IMR-90 (cell line): ENCODE measurements at regions of chr7 and their contacts with region 1.

Region 1: DNA sequence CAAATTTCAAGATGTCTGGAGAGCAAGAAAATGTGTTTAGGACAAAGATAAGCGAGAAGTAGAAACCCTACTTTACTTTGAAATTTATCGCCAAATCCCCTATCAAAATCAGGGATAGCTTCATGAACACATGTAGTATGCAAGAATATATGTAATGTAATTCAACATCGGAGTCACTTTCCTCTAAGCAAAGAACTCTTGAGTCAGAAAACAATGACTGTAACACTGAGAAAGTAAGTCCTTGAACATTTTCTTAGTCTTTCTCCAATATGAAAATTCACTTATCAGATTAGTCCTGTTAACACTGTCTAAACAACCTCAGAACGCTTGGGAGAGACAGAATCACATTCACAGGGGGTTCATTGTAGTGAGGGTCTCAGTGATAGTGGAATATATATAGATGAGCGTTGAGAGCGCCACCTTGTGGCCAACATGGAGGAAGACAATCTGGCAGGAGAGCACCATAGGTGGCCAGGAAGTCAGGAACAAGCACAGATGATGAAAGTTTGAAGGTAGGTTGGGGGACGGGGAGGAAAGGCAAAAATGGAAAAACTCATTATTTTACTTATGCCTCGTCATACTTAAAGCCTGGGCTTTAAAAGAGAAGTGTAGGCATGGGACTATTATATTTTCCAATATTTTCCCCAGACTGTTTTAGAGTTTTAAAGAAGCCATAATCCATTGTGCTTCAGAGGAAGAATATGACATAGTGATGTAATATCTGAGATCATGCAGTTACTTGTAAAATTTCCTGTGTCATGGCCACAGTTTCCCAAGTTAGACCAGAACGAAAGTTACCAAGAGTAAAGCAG is 115.5 kb upstream of the GNAI1 start:
- DNase-seq: peak; percentile 64
- ATAC-seq: peak; percentile 85
- H3K4me3 ChIP-seq: no peak overlapping the region
- H3K27ac ChIP-seq: no peak overlapping the region
- H3K4me1 ChIP-seq: peaks cover 2% of the 10 kb centered on the region; the same call in 1 of the 2 replicates
- H3K27me3 ChIP-seq: no peaks in the 10 kb centered on the region
- CTCF ChIP-seq: peak; percentile 79
- POLR2A ChIP-seq: no peak
- RAD21 ChIP-seq: peak; percentile 77

Region 2: DNA sequence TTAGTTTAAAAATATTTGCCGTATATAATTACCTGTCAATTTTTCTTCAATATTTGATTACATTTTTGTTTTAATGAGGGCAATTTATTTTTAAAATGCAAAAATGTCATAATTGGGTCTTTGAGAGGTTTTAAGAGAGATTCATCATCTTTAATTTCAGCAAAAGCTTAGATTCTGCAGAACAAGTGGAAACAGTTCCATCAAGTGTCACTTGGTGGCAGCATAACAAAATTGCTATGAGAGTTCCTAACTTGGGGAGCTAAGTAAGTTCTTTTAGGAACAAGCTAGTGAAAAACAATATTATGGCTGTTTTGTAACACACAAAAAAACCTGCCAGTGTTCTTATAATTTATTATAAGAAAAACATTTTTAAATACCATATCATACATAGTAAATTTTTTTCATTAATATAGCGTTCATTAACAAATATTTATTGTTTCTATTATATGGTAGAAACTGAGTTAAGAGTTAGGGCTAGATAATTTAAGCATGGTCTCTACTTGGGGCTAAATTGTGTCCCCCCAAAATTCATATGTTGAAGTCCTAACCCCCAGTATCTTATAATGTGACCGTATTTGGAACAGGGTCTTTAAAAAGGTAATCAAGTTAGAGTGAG is 720.9 kb before region 1 on chr7:
- CTCF ChIA-PET with region 1: no interaction called
- POLR2A ChIA-PET with region 1: no interaction called
- dilution Hi-C with region 1: no loop called
- in situ Hi-C with region 1: no loop called
- intact Hi-C with region 1: loop called (anchors 1 kb)
- DNase-seq: peak; percentile 79
- ATAC-seq: peak; percentile 65
- H3K4me3 ChIP-seq: no peak overlapping the region
- H3K27ac ChIP-seq: no peak overlapping the region
- H3K4me1 ChIP-seq: peaks cover 3% of the 10 kb centered on the region; the same call in 1 of the 2 replicates
- H3K27me3 ChIP-seq: no peaks in the 10 kb centered on the region
- CTCF ChIP-seq: peak; percentile 70
- POLR2A ChIP-seq: no peak
- RAD21 ChIP-seq: peak; percentile 73

Region 3: GRCh38 chr7:79452032-79452494 is 567.1 kb before region 1 on chr7:
- CTCF ChIA-PET with region 1: no interaction called
- POLR2A ChIA-PET with region 1: interaction called, 5 read pairs
- dilution Hi-C with region 1: no loop called
- in situ Hi-C with region 1: no loop called
- intact Hi-C with region 1: loop called (anchors 2 kb)
- DNase-seq: peak; percentile 82
- ATAC-seq: peak; percentile 69
- H3K4me3 ChIP-seq: peak overlapping the region; percentile 54
- H3K27ac ChIP-seq: peak overlapping the region; percentile 96
- H3K4me1 ChIP-seq: peaks cover 8% of the 10 kb centered on the region
- H3K27me3 ChIP-seq: no peaks in the 10 kb centered on the region
- CTCF ChIP-seq: no peak
- POLR2A ChIP-seq: peak; percentile 72
- RAD21 ChIP-seq: no peak

Region 4: DNA sequence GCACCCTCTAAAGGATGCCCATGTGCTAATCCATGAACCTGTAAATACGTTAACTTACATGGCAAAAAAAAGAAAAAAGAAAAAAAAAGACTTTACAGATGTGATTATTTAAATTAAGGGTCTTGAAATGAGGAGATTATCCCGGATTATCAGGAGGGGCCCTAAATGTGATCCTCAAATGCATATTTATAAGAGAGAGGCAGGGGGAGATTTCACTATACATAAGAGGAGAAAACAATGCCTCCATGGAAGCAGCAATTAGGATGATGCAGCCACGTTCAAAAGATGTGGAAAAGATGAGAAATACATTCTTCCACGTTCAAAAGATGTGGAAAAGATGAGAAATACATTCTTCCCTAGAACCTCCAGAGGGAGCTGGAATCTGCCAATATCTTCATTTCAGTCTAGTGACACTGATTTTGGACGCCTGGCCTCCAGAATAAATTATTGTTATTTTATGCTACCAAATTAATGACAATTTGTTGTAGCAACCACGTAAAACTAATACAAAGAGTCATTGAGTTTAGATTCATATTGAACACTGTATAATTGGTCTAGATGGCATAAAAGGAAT is 212.9 kb before region 1 on chr7:
- CTCF ChIA-PET with region 1: interaction called, 3 read pairs
- POLR2A ChIA-PET with region 1: no interaction called
- dilution Hi-C with region 1: no loop called
- in situ Hi-C with region 1: loop called (anchors 10 kb)
- intact Hi-C with region 1: loop called (anchors 1 kb)
- DNase-seq: peak; percentile 42
- ATAC-seq: peak; percentile 60
- H3K4me3 ChIP-seq: no peak overlapping the region
- H3K27ac ChIP-seq: no peak overlapping the region
- H3K4me1 ChIP-seq: no peaks in the 10 kb centered on the region; the same call in 1 of the 2 replicates
- H3K27me3 ChIP-seq: no peaks in the 10 kb centered on the region
- CTCF ChIP-seq: peak; percentile 60
- POLR2A ChIP-seq: no peak
- RAD21 ChIP-seq: peak; percentile 73

Region 5: DNA sequence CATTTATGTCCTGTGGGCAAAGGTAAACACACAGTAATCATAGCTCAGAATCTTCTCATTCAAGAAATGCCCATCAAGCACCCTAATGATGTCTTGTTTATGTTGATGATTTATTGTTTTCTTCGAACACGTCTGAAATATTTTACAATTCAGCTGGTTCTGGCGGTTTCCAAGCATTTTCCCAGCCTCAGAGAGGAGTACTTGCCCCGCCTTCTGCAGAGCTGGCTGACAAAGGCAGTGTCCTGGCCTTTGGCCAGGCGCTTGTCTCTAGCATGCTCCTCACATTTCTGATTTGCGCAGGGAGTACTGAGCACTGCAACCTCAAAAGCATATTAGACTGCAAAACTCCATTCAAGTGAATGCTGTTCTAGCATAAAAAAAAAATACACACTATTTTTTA is 198.8 kb before region 1 on chr7:
- CTCF ChIA-PET with region 1: no interaction called
- POLR2A ChIA-PET with region 1: no interaction called
- dilution Hi-C with region 1: no loop called
- in situ Hi-C with region 1: loop called (anchors 10 kb)
- intact Hi-C with region 1: loop called (anchors 5 kb)
- DNase-seq: peak; percentile 85
- ATAC-seq: peak; percentile 68
- H3K4me3 ChIP-seq: no peak overlapping the region
- H3K27ac ChIP-seq: no peak overlapping the region
- H3K4me1 ChIP-seq: peaks cover 3% of the 10 kb centered on the region
- H3K27me3 ChIP-seq: no peaks in the 10 kb centered on the region
- CTCF ChIP-seq: no peak
- POLR2A ChIP-seq: no peak
- RAD21 ChIP-seq: no peak

Region 6: DNA sequence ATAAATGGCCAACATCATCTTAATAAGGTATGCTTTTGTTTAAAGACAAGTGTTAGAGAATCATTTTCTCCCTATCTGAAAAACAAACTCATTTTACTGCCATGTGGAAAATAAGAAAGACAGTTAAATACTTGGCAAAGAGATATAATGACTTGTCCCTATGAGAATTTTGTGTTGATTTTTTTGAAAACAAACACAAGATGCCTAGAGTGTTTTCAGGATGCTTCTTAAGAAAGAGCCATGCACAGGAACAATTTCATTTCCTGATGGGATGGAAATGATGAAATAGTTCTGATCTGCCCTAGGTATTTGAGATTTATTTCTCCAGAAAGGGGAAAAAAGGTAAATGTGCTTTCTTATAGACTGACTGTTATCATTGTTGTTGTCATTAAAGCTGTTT is 122.0 kb before region 1 on chr7:
- CTCF ChIA-PET with region 1: no interaction called
- POLR2A ChIA-PET with region 1: no interaction called
- dilution Hi-C with region 1: no loop called
- in situ Hi-C with region 1: no loop called
- intact Hi-C with region 1: loop called (anchors 5 kb)
- DNase-seq: peak; percentile 34
- ATAC-seq: peak; percentile 29
- H3K4me3 ChIP-seq: no peak overlapping the region
- H3K27ac ChIP-seq: no peak overlapping the region
- H3K4me1 ChIP-seq: peaks cover 7% of the 10 kb centered on the region
- H3K27me3 ChIP-seq: no peaks in the 10 kb centered on the region
- CTCF ChIP-seq: no peak
- POLR2A ChIP-seq: no peak
- RAD21 ChIP-seq: no peak

Region 7: DNA sequence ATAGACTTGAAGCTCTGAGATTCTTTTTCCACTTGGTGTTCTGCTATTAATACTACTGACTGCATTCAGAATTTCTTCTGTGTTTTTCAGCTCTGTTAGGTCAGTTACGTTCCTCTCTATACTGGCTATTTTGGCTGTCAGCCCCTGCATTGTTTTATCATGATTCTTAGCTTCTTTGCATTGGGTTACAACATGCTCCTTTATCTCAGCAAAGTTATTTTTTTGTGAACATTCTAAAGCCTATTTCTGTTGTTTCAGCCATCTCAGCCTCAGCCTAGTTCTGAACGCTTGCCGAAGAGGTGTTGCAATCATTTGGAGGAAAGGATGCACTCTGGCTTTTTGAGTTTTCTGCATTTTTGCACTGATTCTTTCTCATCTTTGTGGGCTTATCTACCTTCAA is 86.0 kb before region 1 on chr7:
- CTCF ChIA-PET with region 1: no interaction called
- POLR2A ChIA-PET with region 1: no interaction called
- dilution Hi-C with region 1: no loop called
- in situ Hi-C with region 1: no loop called
- intact Hi-C with region 1: loop called (anchors 5 kb)
- DNase-seq: peak; percentile 89
- ATAC-seq: peak; percentile 94
- H3K4me3 ChIP-seq: no peak overlapping the region
- H3K27ac ChIP-seq: no peak overlapping the region
- H3K4me1 ChIP-seq: peaks cover 3% of the 10 kb centered on the region
- H3K27me3 ChIP-seq: no peaks in the 10 kb centered on the region
- CTCF ChIP-seq: no peak
- POLR2A ChIP-seq: no peak
- RAD21 ChIP-seq: no peak

Region 8: DNA sequence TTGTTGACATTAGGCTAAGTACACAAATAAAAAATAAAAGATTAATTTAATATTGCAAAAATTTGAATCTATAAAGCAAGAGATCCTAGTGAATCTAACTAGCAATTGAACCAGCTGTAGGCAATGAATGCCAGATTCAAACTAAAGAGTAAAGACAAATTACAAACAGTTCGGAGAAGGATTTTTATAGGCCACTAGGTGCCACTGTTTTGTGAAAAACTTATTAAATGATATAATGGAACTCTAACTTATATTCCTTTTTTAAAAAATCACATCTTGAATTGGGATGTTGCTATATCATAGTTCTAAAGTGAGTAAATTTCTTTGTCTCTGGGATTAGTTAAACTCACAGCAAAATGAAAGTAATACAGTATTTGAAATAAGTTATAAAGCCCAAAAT is 76.4 kb after region 1 on chr7:
- CTCF ChIA-PET with region 1: no interaction called
- POLR2A ChIA-PET with region 1: no interaction called
- dilution Hi-C with region 1: no loop called
- in situ Hi-C with region 1: no loop called
- intact Hi-C with region 1: no loop called
- DNase-seq: peak; percentile 29
- ATAC-seq: no peak; the same call in 1 of the 2 replicates
- H3K4me3 ChIP-seq: no peak overlapping the region
- H3K27ac ChIP-seq: no peak overlapping the region
- H3K4me1 ChIP-seq: no peaks in the 10 kb centered on the region; the same call in 1 of the 2 replicates
- H3K27me3 ChIP-seq: no peaks in the 10 kb centered on the region
- CTCF ChIP-seq: peak; percentile 56
- POLR2A ChIP-seq: no peak
- RAD21 ChIP-seq: peak; percentile 44

Region 9: DNA sequence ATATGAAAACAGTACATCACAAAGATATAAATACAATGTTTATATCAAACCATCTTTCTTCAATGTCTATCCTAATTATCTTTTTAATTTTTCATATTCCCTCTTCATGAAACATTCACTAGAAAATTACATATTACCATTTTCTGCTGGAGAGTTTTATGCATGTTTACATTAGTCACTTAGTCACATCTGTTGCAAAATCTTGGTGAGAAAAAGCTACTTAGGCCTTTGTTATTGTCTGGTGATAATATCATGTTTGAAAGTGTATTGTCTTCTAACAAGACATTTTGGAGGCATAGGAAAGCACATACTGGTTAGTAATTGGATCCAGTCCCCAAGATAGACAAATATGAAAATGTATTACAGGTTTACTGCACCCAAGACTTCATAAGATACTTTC is 279.1 kb after region 1 on chr7:
- CTCF ChIA-PET with region 1: no interaction called
- POLR2A ChIA-PET with region 1: no interaction called
- dilution Hi-C with region 1: no loop called
- in situ Hi-C with region 1: no loop called
- intact Hi-C with region 1: no loop called
- DNase-seq: peak; percentile 26
- ATAC-seq: no peak
- H3K4me3 ChIP-seq: no peak overlapping the region
- H3K27ac ChIP-seq: no peak overlapping the region
- H3K4me1 ChIP-seq: 0 out of 2 replicates have a peak, but pooled peaks cover 2% of the 10 kb centered on the region
- H3K27me3 ChIP-seq: no peaks in the 10 kb centered on the region
- CTCF ChIP-seq: no peak
- POLR2A ChIP-seq: no peak
- RAD21 ChIP-seq: no peak